ENCODE measurements at regions of chr3 and their contacts with region 1.

Region 1: GRCh38 chr3:100254168-100254777 is 6.5 kb upstream of the TBC1D23 start:
- DNase-seq: peak; percentile 68
- H3K4me3 ChIP-seq: no peak overlapping the region
- H3K27ac ChIP-seq: no peak overlapping the region
- H3K4me1 ChIP-seq: peaks cover 9 to 23% of the 10 kb centered on the region in 2 experiments; a peak in 3 of 4 replicates
- H3K27me3 ChIP-seq: no peaks in the 10 kb centered on the region
- CTCF ChIP-seq: peak; percentile 89
- EP300 ChIP-seq: no peak
- RAD21 ChIP-seq: peak; percentile 97

Region 2: DNA sequence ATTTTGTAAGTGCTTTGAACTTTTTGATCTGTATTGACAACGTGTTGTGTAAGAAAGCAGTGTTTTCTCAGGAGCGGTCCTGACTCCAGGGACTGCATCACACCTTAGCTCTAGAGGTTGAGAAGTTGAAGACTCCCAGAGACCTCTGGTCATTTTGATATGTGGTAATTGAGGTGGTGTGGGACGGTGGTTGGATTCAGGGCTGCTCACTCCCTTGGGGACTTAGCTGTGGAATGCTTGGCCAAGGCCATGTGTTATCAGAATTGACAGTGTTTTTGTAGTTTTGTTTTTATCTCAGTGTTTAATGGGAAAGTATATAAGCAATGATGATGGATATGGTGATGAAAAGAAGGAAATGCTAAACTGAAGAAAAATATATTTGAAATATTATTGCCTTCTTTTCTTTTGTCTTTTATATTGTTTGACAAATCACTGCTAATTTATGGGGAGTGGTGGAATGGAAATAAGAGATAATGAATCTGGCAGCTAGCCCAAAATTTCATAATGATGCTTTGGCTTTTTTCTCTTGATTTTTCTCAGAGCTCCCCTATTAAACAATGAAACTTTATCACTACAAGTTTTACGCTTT is 420.6 kb before region 1 on chr3:
- CTCF ChIA-PET with region 1: interaction called, 132 read pairs
- POLR2A ChIA-PET with region 1: interaction called, 5 read pairs
- DNase-seq: peak; percentile 8
- H3K4me3 ChIP-seq: no peak overlapping the region
- H3K27ac ChIP-seq: no peak overlapping the region
- H3K4me1 ChIP-seq: peaks cover 0 to 4% of the 10 kb centered on the region in 2 experiments; a peak in 3 of 4 replicates
- H3K27me3 ChIP-seq: no peaks in the 10 kb centered on the region
- CTCF ChIP-seq: no peak
- EP300 ChIP-seq: no peak
- RAD21 ChIP-seq: no peak

Region 3: GRCh38 chr3:99859825-99860224 is 394.4 kb before region 1 on chr3:
- CTCF ChIA-PET with region 1: interaction called, 22 read pairs
- POLR2A ChIA-PET with region 1: no interaction called
- DNase-seq: peak; percentile 19
- H3K4me3 ChIP-seq: no peak overlapping the region
- H3K27ac ChIP-seq: peak overlapping the region; percentile 50 to 81; a peak in 3 of 4 replicates
- H3K4me1 ChIP-seq: peaks cover 2 to 39% of the 10 kb centered on the region in 2 experiments; a peak in 3 of 4 replicates
- H3K27me3 ChIP-seq: no peaks in the 10 kb centered on the region
- CTCF ChIP-seq: no peak
- EP300 ChIP-seq: peak; percentile 86 to 98
- RAD21 ChIP-seq: no peak

Region 4: GRCh38 chr3:100045696-100046095 is 208.6 kb before region 1 on chr3:
- CTCF ChIA-PET with region 1: interaction called, 11 read pairs
- POLR2A ChIA-PET with region 1: no interaction called
- DNase-seq: no peak
- H3K4me3 ChIP-seq: no peak overlapping the region
- H3K27ac ChIP-seq: peak overlapping the region in 1 of 2 experiments; percentile 39; a peak in 1 of 4 replicates
- H3K4me1 ChIP-seq: peaks cover 18 to 42% of the 10 kb centered on the region in 2 experiments
- H3K27me3 ChIP-seq: no peaks in the 10 kb centered on the region
- CTCF ChIP-seq: no peak
- EP300 ChIP-seq: no peak
- RAD21 ChIP-seq: no peak

Region 5: DNA sequence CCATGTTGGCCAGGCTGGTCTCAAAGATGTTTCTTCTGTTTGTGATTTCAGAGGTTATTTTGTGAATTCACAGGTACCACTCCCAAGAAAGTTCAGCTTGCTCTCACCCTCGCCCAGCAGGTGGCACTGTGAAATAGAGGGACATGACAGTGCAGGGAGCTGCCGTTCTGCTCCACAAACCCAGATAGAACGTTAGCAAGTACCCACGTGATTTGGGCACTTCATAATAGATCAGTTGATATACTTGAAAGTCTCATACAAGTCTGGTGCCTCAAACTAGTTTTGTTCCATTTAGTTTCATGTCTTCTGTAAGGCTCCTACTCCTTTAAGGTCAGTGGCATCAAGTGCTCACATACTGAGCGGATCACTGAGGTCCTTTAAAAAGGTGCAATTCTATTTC is 185.4 kb before region 1 on chr3:
- CTCF ChIA-PET with region 1: interaction called, 116 read pairs
- POLR2A ChIA-PET with region 1: interaction called, 4 read pairs
- DNase-seq: peak; percentile 73
- H3K4me3 ChIP-seq: no peak overlapping the region; a peak in 1 of 4 replicates
- H3K27ac ChIP-seq: no peak overlapping the region
- H3K4me1 ChIP-seq: peaks cover 0 to 8% of the 10 kb centered on the region in 2 experiments; a peak in 1 of 4 replicates
- H3K27me3 ChIP-seq: no peaks in the 10 kb centered on the region
- CTCF ChIP-seq: peak; percentile 83
- EP300 ChIP-seq: no peak
- RAD21 ChIP-seq: peak; percentile 91

Region 6: GRCh38 chr3:100159331-100160153 is 94.7 kb before region 1 on chr3:
- CTCF ChIA-PET with region 1: interaction called, 23 read pairs
- POLR2A ChIA-PET with region 1: no interaction called
- DNase-seq: peak; percentile 19
- H3K4me3 ChIP-seq: no peak overlapping the region; a peak in 1 of 4 replicates
- H3K27ac ChIP-seq: peak overlapping the region; percentile 84 to 95
- H3K4me1 ChIP-seq: peaks cover 24 to 32% of the 10 kb centered on the region in 2 experiments
- H3K27me3 ChIP-seq: no peaks in the 10 kb centered on the region
- CTCF ChIP-seq: no peak
- EP300 ChIP-seq: peak in 1 of 2 experiments; percentile 59; a peak in 3 of 4 replicates
- RAD21 ChIP-seq: no peak

Region 7: DNA sequence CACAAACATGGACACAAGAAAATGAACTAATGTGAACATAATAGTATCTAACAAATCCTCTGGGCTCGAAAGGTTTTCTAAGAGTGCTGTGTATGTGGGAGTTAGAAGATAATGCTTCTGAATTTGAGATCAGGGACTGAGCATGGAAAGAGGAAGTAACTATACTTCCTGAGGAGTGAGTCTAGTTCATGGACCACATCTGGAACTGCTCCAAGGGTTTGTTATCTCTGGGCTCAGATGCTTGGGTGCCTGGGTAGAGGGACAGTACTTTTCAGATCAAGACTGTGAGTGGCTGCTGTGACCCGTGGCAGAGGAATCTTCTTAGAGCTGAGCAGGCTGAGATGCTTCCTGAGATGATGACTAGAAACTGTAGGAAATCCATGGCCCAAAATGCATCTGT is 35.1 kb after region 1 on chr3:
- CTCF ChIA-PET with region 1: no interaction called
- POLR2A ChIA-PET with region 1: no interaction called
- DNase-seq: no peak
- H3K4me3 ChIP-seq: no peak overlapping the region
- H3K27ac ChIP-seq: no peak overlapping the region
- H3K4me1 ChIP-seq: no peaks in the 10 kb centered on the region
- H3K27me3 ChIP-seq: no peaks in the 10 kb centered on the region
- CTCF ChIP-seq: no peak
- EP300 ChIP-seq: no peak
- RAD21 ChIP-seq: no peak

Measured in SK-N-SH (cell line).